ENCODE measurements at regions of chr16 and their contacts with region 1.

Region 1: GRCh38 chr16:83826146-83826913 is 18.6 kb downstream of the HSBP1 start:
- DNase-seq: peak; percentile 92
- H3K4me3 Mint-ChIP-seq: peak overlapping the region; percentile 42
- H3K27ac Mint-ChIP-seq: no peak overlapping the region
- H3K4me1 Mint-ChIP-seq: peaks cover 16% of the 10 kb centered on the region
- H3K27me3 Mint-ChIP-seq: peaks cover 30% of the 10 kb centered on the region
- CTCF ChIP-seq: peak; percentile 95

Region 2: GRCh38 chr16:83878838-83879237 is 52.5 kb after region 1 on chr16:
- CTCF ChIA-PET with region 1: interaction called, 4 read pairs
- intact Hi-C with region 1: loop called (anchors 1 kb)
- DNase-seq: peak; percentile 39
- H3K4me3 Mint-ChIP-seq: no peak overlapping the region
- H3K27ac Mint-ChIP-seq: no peak overlapping the region
- H3K4me1 Mint-ChIP-seq: peaks cover 8% of the 10 kb centered on the region
- H3K27me3 Mint-ChIP-seq: peaks cover 69% of the 10 kb centered on the region
- CTCF ChIP-seq: peak; percentile 49

Region 3: GRCh38 chr16:84044118-84044488 is 217.8 kb after region 1 on chr16:
- CTCF ChIA-PET with region 1: no interaction called
- intact Hi-C with region 1: loop called (anchors 5 kb)
- DNase-seq: peak; percentile 42
- H3K4me3 Mint-ChIP-seq: no peak overlapping the region
- H3K27ac Mint-ChIP-seq: no peak overlapping the region
- H3K4me1 Mint-ChIP-seq: peaks cover 19% of the 10 kb centered on the region
- H3K27me3 Mint-ChIP-seq: peaks cover 61% of the 10 kb centered on the region
- CTCF ChIP-seq: peak; percentile 57

Region 4: DNA sequence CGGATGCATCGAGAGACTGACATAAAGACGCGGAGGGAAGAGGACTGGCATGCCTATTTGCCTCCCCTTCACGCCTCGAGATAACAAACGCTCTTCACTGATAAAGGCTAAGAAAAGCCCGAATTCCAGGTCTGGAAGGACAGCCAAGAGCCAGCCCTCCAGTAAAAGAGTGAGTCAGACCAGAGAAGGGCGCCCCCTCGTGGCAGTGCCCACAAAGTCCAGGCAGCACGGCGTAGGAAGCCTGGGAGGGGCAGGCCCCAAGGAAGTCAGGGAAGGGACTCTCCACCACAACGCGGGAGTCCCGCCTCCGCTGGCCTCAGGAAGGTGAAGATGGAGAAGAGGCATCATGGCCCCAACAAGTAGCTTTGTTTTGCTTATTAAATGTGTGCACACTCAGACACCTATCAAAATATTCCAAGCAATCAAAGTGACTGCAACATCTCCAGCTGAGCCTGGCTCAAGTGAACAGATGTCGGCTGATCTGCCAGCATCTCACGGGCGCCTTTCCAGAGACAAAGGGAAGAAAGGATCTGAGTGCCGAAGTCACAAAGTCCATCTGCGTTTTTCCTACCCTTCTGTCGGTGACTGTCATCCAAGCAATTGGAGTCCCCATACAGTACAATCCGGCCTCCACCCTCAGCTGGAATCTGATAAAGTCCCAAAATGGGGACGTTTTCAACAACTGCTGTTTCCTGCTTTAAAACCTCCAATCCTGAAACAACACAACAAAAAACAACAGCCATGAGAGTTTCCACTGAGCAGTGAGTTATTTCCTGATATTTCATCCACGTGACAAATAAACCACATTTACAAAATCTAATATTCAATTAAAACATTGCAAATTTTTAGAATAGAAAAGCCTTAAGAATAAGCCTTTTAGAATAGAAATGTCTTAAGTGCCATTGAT is 236.7 kb after region 1 on chr16:
- CTCF ChIA-PET with region 1: no interaction called
- intact Hi-C with region 1: loop called (anchors 1 kb)
- DNase-seq: peak; percentile 86
- H3K4me3 Mint-ChIP-seq: no peak overlapping the region
- H3K27ac Mint-ChIP-seq: no peak overlapping the region
- H3K4me1 Mint-ChIP-seq: no peaks in the 10 kb centered on the region
- H3K27me3 Mint-ChIP-seq: no peaks in the 10 kb centered on the region
- CTCF ChIP-seq: peak; percentile 85